Prostate gland (tissue), 2 donors: ENCODE measurements at regions of chr12 and their contacts with region 1.

Region 1: DNA sequence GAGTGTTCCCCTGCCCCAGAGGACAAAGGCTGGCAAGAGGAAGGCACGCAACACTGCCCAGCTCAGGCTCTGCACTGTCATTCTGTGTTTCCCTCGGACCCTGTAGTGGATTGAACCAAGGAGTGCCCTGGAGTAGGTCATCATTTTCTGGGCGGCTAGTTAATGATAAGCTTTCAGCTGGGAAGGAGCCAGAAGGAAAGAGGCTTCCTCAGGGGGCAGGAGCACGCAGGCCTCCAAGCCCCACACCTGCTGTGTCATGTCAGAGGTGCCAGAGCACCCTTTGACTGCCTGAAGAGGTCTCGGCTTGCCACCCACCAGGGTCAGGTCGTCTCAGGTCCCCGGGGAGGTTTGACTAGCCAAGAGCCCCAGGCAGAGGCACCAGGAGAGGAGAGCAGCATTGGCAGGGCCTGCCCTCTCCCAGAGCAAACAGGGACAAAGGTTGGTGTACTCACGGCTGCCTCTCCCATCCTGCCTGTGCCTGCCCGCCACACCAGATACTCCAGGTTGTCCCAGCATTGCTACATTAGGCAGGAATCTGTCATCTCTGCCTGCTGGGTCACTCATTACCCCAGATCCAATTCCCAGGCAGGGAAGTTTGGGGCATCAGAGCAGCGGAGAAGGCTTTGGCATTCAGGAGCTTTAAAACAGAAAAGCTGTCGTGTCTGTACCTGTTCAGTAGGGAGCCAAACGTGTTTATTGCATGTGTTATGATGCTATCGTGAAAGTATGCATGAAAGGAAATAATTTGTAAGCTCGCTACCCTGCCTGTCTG is 33.5 kb upstream of the ATP2A2 start:
- DNase-seq: peak; percentile 82
- H3K4me3 ChIP-seq: no peak overlapping the region
- H3K27ac ChIP-seq: peak overlapping the region; percentile 84 to 89
- H3K4me1 ChIP-seq: peaks cover 24% of the 10 kb centered on the region
- H3K27me3 ChIP-seq: no peaks in the 10 kb centered on the region
- CTCF ChIP-seq: no peak
- POLR2A ChIP-seq: no peak

Region 2: GRCh38 chr12:109736552-109737108 is 510.9 kb before region 1 on chr12:
- intact Hi-C with region 1: no loop called
- DNase-seq: no peak
- H3K4me3 ChIP-seq: no peak overlapping the region
- H3K27ac ChIP-seq: no peak overlapping the region
- H3K4me1 ChIP-seq: no peaks in the 10 kb centered on the region
- H3K27me3 ChIP-seq: no peaks in the 10 kb centered on the region
- CTCF ChIP-seq: no peak
- POLR2A ChIP-seq: no peak

Region 3: DNA sequence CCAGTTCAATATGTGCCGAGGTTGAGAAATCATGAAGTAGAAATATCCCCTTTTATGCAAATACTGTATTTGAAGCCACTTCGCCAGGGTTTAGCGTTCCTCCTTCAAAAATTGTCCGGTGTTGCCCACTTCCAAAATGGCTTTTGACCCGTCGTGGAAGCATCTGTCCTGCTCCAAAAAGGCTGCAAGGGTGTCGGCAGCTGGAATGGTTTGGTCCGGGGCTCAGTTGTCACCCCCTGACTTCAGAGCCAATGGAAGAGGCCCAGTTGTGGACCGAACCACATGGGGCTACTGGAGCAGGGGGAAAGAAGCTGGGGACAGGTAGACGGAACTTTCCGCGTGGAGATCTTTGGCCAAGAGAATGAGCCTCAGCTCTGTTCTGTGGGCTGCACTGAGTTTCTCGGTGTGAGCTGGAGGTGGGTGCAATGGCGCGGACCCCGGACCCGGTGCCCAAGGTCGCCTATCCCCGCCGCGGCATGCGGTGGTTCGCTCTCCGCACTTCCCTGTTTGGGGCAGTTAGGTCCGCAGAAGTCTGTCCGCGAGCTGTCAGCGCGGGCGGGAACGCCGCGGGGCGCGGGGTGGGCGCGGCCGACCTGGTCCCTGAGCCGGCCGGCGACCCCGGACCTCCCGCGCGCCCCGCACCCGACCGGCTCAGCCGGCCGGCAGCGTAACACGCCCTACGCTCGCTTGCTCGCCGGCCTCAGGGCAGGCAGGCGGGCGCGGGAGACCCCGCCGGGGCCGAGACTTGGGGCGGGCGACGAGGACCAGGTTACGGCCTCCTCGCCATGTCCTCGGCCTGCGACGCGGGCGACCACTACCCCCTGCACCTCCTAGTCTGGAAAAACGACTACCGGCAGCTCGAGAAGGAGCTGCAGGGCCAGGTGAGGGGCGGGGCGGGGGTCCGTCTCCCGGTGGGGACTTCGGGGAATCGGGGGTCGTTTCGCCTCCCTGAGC is 248.3 kb before region 1 on chr12 and contains the start of gene ANKRD13A:
- intact Hi-C with region 1: no loop called
- DNase-seq: peak; percentile 87
- H3K4me3 ChIP-seq: peak within 1 kb of the TSS; percentile 96 to 99
- H3K27ac ChIP-seq: peak within 1 kb of the TSS; percentile 79 to 81
- H3K4me1 ChIP-seq: no peaks in the 10 kb centered on the region
- H3K27me3 ChIP-seq: no peaks in the 10 kb centered on the region
- CTCF ChIP-seq: peak in 1 of 4 experiments; percentile 18
- POLR2A ChIP-seq: peak; percentile 73
- total RNA-seq, gene ANKRD13A: 76.1 to 87.4 TPM

Region 4: GRCh38 chr12:110270125-110270962 is 22.8 kb after region 1 on chr12:
- intact Hi-C with region 1: loop called (anchors 2 kb)
- DNase-seq: peak; percentile 74
- H3K4me3 ChIP-seq: no peak overlapping the region
- H3K27ac ChIP-seq: peak overlapping the region; percentile 58 to 65
- H3K4me1 ChIP-seq: no peaks in the 10 kb centered on the region
- H3K27me3 ChIP-seq: no peaks in the 10 kb centered on the region
- CTCF ChIP-seq: no peak
- POLR2A ChIP-seq: no peak